Mammary epithelial cell (primary cell): ENCODE measurements at regions of chr7 and their contacts with region 1.

Region 1: DNA sequence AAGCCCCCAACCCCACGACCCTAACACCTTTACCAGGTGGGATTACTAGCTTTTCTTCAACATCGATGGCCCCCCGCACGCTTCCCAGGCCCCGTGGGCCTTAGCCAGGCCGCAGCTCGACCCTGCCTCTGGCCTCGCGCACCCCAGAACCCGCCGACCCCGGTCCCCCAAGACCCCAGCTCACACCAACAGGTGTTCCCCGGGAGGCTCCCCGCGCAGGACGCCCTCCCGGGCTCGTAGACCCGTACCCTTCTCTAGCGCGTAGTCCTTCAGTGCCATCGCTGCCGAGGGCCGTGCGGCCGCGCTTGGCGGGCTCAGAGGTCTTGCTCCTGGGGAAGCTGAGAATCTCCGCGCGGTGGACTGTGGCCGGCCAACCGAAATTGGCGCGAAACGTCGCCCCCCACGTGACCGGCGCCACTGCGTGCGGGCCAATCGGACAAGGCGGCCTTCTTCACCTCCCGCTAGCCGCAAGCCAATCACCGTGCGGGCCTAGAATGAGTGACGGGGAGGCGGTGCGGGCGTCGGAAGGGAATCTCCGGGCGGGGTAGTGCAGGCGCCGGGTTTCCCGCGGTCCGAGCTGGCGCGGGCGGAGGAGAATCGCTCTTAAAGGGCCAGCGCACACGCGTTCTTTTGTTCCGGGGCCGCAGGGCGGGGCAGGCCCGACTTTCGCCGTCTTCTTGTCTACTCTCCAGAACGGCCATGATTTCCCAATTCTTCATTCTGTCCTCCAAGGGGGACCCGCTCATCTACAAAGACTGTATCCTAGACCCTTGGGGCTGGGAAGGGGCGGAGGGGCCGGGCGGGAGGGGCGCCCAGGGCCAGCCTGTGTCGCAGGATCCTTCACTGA is at the starts of genes AP4M1 and MCM7:
- DNase-seq: peak; percentile 99
- H3K4me3 ChIP-seq: peak within 1 kb of the TSS; percentile 90 to 95 (median 94)
- H3K27ac ChIP-seq: peak within 1 kb of the TSS; percentile 93
- H3K4me1 ChIP-seq: peaks cover 14% of the 10 kb centered on the region
- H3K27me3 ChIP-seq: no peaks in the 10 kb centered on the region
- CTCF ChIP-seq: no peak
- total RNA-seq, gene AP4M1: 13.0 to 17.4 TPM
- total RNA-seq, gene MCM7: 16.0 to 114 TPM

Region 2: DNA sequence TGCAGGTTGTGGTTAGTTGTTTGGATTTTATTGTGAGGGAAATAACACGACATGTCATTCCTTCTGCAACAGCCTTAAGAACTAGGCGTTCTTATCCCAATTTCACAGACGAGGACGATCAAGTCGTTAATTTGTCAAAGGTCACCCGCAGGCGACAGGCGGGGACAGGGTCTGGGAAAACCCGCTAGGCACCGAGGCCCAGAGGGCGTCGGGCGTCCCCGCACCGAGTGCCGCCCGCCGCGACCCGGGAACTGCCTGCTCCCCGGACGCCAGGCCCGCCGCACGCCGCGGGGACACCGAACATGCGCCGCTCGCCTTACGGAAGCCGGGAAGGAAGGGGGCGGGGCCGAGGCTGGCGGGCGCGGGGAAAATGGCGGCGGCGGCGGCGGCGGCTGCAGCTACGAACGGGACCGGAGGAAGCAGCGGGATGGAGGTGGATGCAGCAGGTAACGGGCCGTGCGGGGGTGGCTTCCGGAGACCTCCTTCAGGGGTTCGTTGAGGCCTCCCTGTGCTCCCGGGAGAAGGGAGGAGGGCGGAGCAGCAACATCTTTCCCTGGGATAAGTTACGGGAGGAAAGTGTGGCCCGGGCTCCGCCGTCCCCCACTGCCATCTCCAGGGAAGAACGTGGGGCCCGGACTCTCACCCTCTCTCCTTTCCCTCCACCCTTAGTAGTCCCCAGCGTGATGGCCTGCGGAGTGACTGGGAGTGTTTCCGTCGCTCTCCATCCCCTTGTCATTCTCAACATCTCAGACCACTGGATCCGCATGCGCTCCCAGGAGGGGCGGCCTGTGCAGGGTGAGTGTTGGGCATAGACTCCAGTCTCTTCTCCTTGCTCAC is 12.4 kb before region 1 on chr7 and contains the start of gene COPS6:
- CTCF ChIA-PET with region 1: no interaction called
- dilution Hi-C with region 1: no loop called
- in situ Hi-C with region 1: no loop called
- intact Hi-C with region 1: loop called (anchors 1 kb)
- DNase-seq: peak; percentile 77
- H3K4me3 ChIP-seq: peak within 1 kb of the TSS; percentile 87 to 93 (median 92)
- H3K27ac ChIP-seq: peak within 1 kb of the TSS; percentile 69
- H3K4me1 ChIP-seq: peaks cover 31% of the 10 kb centered on the region
- H3K27me3 ChIP-seq: no peaks in the 10 kb centered on the region
- CTCF ChIP-seq: no peak
- total RNA-seq, gene COPS6: 32.7 to 106 TPM

Region 3: GRCh38 chr7:100119062-100119700 is 17.9 kb after region 1 on chr7 and contains the starts of genes CNPY4 and TAF6:
- CTCF ChIA-PET with region 1: no interaction called
- dilution Hi-C with region 1: no loop called
- in situ Hi-C with region 1: no loop called
- intact Hi-C with region 1: loop called (anchors 1 kb)
- DNase-seq: peak; percentile 92
- H3K4me3 ChIP-seq: peak within 1 kb of the TSS; percentile 90 to 98 (median 97)
- H3K27ac ChIP-seq: peak within 1 kb of the TSS; percentile 89
- H3K4me1 ChIP-seq: peaks cover 8% of the 10 kb centered on the region
- H3K27me3 ChIP-seq: no peaks in the 10 kb centered on the region
- CTCF ChIP-seq: peak in 1 of 2 donors; percentile 16
- total RNA-seq, gene CNPY4: 6.9 to 7.5 TPM
- total RNA-seq, gene TAF6: 28.8 to 55.3 TPM

Region 4: DNA sequence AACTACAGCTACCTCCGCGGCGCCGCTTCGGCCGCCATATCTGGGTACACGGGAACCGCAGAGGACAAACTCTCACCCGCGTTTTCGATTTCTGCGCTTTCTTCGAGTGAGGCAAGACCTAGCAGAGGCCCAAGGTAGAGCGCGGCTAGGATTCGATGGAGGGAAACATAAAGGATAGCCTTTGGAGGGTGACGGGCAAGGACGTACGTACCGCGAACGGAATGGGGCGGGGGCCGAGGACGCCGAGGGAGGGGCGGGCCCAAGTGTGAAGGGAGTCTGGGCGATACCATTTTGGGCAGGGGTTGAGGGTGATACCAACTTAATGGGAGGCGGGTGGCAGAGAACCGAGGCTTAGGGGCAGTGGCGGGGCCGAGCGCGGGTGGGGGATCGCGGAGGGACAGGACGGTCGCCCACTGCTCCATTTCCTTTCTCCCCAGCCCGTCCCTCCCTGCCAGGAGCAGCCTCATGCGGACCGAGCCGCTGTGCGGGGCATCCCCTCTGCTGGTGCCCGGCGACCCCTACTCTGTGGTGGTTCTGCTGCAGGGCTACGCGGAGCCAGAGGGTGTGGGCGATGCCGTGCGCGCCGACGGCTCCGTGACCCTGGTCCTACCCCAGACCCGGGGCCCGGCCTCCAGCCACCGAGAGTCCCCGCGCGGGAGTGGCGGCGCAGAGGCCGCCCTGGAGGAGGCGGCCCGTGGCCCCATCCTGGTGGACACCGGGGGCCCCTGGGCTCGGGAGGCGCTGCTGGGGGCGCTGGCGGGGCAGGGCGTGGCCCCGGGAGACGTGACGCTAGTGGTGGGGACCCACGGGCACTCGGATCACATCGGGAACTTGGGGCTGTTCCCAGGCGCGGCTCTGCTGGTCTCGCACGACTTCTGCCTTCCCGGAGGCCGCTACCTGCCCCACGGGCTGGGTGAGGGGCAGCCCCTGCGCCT is 26.0 kb after region 1 on chr7 and contains the start of gene MBLAC1:
- CTCF ChIA-PET with region 1: no interaction called
- dilution Hi-C with region 1: no loop called
- in situ Hi-C with region 1: no loop called
- intact Hi-C with region 1: loop called (anchors 1 kb)
- DNase-seq: peak; percentile 86
- H3K4me3 ChIP-seq: peak within 1 kb of the TSS; percentile 62 to 95 (median 90)
- H3K27ac ChIP-seq: peak within 1 kb of the TSS; percentile 90
- H3K4me1 ChIP-seq: peaks cover 7% of the 10 kb centered on the region
- H3K27me3 ChIP-seq: no peaks in the 10 kb centered on the region
- CTCF ChIP-seq: no peak
- total RNA-seq, gene MBLAC1: 1.2 to 1.5 TPM

Region 5: DNA sequence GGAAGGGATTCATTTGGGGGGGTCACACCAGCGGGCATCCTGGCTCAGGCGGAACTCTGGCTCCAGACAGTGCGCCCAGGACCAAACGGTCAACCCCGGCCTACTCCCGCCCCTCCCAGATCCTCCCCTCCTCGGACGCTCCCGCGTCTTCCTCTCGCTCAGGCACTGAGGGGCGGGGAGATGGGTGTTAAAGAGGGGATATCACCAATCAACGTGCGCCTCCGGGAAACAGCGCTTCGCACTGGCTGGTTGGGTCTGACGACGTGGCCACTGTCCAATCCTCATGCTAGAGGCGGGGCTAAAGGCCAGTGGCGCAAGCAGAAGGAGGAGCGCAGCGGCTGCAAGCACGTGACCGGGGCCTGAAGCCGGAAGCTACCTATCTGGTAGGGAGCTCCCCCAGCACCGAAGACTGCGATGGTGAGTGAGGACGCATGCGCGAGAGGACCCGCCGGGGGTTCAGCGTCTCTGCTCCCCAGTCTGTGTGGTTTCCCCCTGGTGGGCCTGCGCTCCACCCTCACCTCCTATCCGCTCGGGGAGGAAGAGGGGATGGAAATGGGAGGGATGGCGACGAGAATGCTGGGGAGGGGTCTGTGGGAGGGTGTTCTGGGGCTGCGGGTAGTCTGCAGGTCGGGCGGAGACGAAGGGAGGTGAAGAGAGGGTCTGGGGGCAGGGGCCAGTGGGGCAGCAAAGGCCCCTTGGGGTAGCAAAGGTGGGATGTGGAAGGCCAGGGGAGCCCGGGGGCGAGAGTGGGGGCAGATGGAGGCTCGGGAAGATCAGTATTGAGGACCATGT is 47.5 kb after region 1 on chr7 and contains the start of gene LAMTOR4:
- CTCF ChIA-PET with region 1: no interaction called
- dilution Hi-C with region 1: no loop called
- in situ Hi-C with region 1: no loop called
- intact Hi-C with region 1: no loop called
- DNase-seq: peak; percentile 98
- H3K4me3 ChIP-seq: peak within 1 kb of the TSS; percentile 82 to 91 (median 83)
- H3K27ac ChIP-seq: peak within 1 kb of the TSS; percentile 20
- H3K4me1 ChIP-seq: peaks cover 8% of the 10 kb centered on the region
- H3K27me3 ChIP-seq: no peaks in the 10 kb centered on the region
- CTCF ChIP-seq: no peak
- total RNA-seq, gene LAMTOR4: 41.7 to 73.2 TPM

Region 6: DNA sequence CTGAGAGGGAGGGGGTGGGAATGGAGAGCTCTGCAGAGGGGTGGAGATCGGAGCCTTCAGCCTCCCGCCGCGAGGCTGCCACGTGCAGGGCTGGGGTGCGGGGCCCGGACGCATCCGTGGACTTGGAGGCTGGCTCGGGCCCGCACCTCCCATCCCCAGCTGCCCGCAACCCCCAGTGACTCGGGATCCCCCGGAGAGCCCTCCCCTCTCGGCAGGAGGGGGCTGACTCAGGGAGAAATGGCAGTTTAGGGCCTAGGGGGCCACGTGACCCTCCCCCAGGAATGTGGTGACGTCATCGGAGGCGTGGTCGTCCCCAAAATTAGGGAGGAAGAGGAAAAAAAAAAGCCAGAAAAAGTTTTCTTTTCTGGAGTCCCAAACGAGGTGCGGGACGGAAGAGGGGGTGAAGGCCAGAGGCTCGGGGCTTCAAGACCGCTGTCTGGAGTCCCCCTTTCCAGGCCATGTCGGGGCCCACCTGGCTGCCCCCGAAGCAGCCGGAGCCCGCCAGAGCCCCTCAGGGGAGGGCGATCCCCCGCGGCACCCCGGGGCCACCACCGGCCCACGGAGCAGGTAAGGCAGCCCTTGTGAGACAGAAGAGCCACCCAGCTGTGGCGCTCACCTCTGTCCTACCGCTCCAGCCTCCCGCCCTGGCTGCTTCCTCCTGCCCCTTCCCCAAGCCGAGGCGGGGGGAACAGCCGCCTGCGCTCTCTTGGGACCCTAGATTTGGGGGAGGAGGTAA is 766.0 kb after region 1 on chr7 and contains the start of gene TRIP6:
- CTCF ChIA-PET with region 1: no interaction called
- dilution Hi-C with region 1: no loop called
- in situ Hi-C with region 1: no loop called
- intact Hi-C with region 1: no loop called
- DNase-seq: peak; percentile 88
- H3K4me3 ChIP-seq: peak within 1 kb of the TSS; percentile 96 to 98 (median 97)
- H3K27ac ChIP-seq: peak within 1 kb of the TSS; percentile 95
- H3K4me1 ChIP-seq: peaks cover 30% of the 10 kb centered on the region
- H3K27me3 ChIP-seq: no peaks in the 10 kb centered on the region
- CTCF ChIP-seq: no peak
- total RNA-seq, gene TRIP6: 56.3 to 129 TPM